ENCODE measurements at regions of chr13 and their contacts with region 1.

Region 1: DNA sequence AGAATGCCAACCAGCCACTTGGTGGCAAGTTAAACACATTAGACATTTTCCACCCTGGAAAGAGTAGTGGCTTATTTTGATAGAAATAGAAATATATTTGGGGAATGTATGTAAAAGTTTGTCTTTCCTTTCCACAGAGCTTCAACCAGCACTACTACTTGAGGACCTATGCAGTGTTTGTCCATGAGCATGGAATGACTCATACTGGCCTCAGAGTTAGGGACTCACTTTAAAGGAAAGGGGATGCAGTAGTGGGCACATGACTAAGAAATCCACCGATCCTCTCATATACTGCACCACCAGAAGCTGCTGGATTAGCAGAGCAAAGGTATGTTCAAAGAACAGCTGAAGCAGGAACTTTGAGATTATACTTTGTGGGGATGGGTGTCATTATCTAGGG is 62.6 kb downstream of the LACC1 start:
- H3K4me3 Mint-ChIP-seq: no peak overlapping the region
- H3K27ac Mint-ChIP-seq: no peak overlapping the region
- H3K4me1 Mint-ChIP-seq: peaks cover 4% of the 10 kb centered on the region
- H3K27me3 Mint-ChIP-seq: peaks cover 87% of the 10 kb centered on the region

Region 2: DNA sequence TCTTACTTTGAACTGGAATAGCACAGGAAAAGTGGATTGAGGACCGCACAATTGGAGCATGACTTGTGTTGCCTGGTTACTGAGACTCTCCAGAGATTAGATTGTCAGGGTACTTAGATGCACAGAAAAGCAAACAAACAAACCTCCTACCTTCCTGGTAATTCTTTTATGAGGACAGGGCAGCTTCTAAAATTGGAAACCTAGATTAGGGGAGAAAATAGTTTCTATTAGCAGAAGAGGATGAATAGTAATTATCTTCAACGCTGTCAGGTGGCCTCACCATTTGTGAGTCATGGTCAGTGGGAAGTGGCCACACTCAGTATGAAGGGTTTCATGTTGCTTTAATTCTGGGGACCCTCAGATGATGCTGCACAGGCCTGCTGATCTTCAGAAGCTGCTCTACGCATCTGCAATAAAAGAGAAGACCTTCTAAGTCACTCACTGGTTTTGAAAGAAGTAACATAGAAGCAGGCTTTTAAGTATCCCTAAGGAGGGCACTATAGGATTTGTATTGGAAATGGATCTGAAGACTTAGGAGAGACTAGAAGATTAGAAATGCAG is 44.2 kb after region 1 on chr13:
- intact Hi-C with region 1: no loop called
- H3K4me3 Mint-ChIP-seq: no peak overlapping the region
- H3K27ac Mint-ChIP-seq: no peak overlapping the region
- H3K4me1 Mint-ChIP-seq: no peaks in the 10 kb centered on the region
- H3K27me3 Mint-ChIP-seq: peaks cover 29% of the 10 kb centered on the region

Region 3: DNA sequence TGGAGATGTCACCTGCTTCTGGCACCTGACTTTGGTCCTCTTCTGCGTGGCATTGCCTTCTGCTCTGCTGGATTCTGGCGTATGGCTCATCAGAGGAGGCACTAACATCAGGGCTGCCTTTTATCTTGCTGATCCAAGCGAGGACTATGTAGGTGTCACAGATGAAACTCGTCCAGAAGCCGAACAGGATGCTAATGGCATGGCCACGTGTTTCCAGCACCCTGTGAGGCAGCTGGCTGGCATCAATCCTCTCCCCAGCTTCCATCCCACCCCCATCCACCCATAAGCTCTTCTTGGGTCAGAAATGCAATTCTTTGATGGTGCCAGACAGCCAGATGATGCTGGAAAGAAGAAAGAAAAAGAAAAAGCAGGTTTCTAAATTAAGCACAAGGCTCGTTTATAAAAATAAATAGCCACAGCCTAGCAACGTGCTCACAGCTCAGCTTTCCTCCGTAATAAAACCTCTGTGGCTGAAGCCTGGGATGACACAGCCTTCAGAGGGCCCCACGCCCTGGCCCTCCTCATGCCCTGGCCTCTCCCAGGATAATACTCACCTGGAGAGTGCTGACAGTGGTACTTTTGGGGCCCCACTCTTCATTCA is 218.4 kb after region 1 on chr13:
- intact Hi-C with region 1: loop called (anchors 10 kb)
- H3K4me3 Mint-ChIP-seq: no peak overlapping the region
- H3K27ac Mint-ChIP-seq: no peak overlapping the region
- H3K4me1 Mint-ChIP-seq: peaks cover 25% of the 10 kb centered on the region
- H3K27me3 Mint-ChIP-seq: peaks cover 38% of the 10 kb centered on the region